Naive thymus-derived CD4-positive, alpha-beta T cell (primary cell): ENCODE measurements at regions of chr3 and their contacts with region 1.

Region 1: DNA sequence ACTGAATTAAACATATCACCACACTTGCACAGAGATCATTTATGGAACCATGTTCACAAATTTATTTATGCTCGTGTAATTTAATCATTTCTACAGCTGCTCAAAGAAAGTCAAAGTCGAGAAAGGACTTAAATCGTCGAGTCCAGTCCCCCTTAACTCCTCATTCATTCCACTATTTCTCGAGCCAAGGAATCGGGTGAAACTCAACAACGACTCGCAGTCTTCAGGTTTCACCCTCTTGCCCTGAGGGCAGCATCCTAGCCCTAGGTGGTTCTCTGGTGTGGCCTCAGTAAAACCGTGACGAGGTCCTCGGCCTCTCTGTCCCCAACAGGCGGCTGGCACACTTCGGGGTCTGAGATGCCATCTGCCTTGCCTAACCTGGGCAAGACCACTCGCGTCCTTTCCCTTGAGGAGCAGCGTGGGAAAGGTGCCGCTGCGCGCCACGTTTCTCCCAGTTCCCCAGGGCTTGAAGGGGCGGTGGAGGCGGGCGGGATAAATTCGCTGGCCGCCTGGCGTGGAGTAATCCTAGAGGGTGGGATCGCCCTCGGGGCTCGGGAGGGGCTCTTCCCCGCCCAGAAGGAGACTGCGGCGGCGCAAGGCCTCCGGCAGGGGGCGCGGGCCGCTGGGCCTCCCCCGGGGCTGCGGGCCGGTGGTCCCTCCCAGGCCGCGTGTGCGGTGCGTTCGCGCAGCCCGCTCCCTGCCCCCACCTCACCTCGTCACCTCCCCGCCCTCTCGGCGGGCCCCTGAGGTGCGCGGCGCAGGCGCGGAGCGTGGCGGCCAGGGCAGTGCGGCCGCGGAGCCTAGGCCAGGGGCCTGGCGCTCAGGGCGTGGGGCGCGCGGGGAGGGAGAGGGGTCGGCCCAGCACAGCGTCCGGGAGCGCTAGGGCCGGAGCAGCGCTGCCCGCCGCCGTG is at the start of gene ZNF639:
- DNase-seq: peak; percentile 80 to 89 (median 85)
- ATAC-seq: peak; percentile 94
- H3K4me3 ChIP-seq: peak within 1 kb of the TSS; percentile 93
- H3K4me3 Mint-ChIP-seq: peak within 1 kb of the TSS; percentile 88 to 96 (median 94)
- H3K27ac ChIP-seq: peak within 1 kb of the TSS; percentile 98
- H3K27ac Mint-ChIP-seq: peak within 1 kb of the TSS; percentile 81 to 98 (median 93)
- H3K4me1 ChIP-seq: peaks cover 9 to 22% of the 10 kb centered on the region in 2 donors
- H3K4me1 Mint-ChIP-seq: peaks cover 22 to 48% (median 37%) of the 10 kb centered on the region in 7 donors
- H3K27me3 ChIP-seq: no peaks in the 10 kb centered on the region
- H3K27me3 Mint-ChIP-seq: peaks cover 0 to 16% (median 0%) of the 10 kb centered on the region in 5 donors
- total RNA-seq, gene ZNF639: 33.1 to 74.9 (median 46.0) TPM

Region 2: GRCh38 chr3:179071550-179072397 is 250.8 kb before region 1 on chr3 and contains the start of gene ZMAT3:
- CTCF ChIA-PET with region 1: interaction called, 3 read pairs
- POLR2A ChIA-PET with region 1: interaction called, 5 read pairs
- intact Hi-C with region 1: loop called in 1 of 2 experiments (anchors 1 kb)
- DNase-seq: peak; percentile 72 to 88 (median 83)
- ATAC-seq: peak; percentile 88
- H3K4me3 ChIP-seq: peak within 1 kb of the TSS; percentile 74
- H3K4me3 Mint-ChIP-seq: peak within 1 kb of the TSS; percentile 97 to 100 (median 98)
- H3K27ac ChIP-seq: peak within 1 kb of the TSS; percentile 87
- H3K27ac Mint-ChIP-seq: peak within 1 kb of the TSS; percentile 89 to 98 (median 95)
- H3K4me1 ChIP-seq: peaks cover 13 to 18% of the 10 kb centered on the region in 2 donors
- H3K4me1 Mint-ChIP-seq: peaks cover 24 to 81% (median 59%) of the 10 kb centered on the region in 7 donors
- H3K27me3 ChIP-seq: no peaks in the 10 kb centered on the region
- H3K27me3 Mint-ChIP-seq: no peaks in the 10 kb centered on the region
- total RNA-seq, gene ZMAT3: 20.6 to 23.7 (median 21.7) TPM

Region 3: GRCh38 chr3:179260949-179261765 is 61.4 kb before region 1 on chr3:
- CTCF ChIA-PET with region 1: no interaction called
- POLR2A ChIA-PET with region 1: interaction called, 3 read pairs
- intact Hi-C with region 1: loop called (anchors 2 kb)
- DNase-seq: peak; percentile 34 to 73 (median 60)
- ATAC-seq: peak; percentile 96
- H3K4me3 ChIP-seq: peak overlapping the region; percentile 66
- H3K4me3 Mint-ChIP-seq: peak overlapping the region; percentile 60 to 89 (median 83)
- H3K27ac ChIP-seq: peak overlapping the region; percentile 58
- H3K27ac Mint-ChIP-seq: peak overlapping the region; percentile 11 to 78 (median 59)
- H3K4me1 ChIP-seq: peaks cover 0 to 6% of the 10 kb centered on the region in 2 donors
- H3K4me1 Mint-ChIP-seq: peaks cover 4 to 29% (median 21%) of the 10 kb centered on the region in 7 donors
- H3K27me3 ChIP-seq: no peaks in the 10 kb centered on the region
- H3K27me3 Mint-ChIP-seq: peaks cover 0 to 20% (median 0%) of the 10 kb centered on the region in 5 donors

Region 4: GRCh38 chr3:179451265-179452175 is 129.0 kb after region 1 on chr3 and contains the start of gene GNB4:
- CTCF ChIA-PET with region 1: no interaction called
- POLR2A ChIA-PET with region 1: no interaction called
- intact Hi-C with region 1: loop called in 1 of 2 experiments (anchors 2 kb)
- DNase-seq: peak in 8 of 9 donors; percentile 8 to 72 (median 32)
- ATAC-seq: peak; percentile 91
- H3K4me3 ChIP-seq: peak within 1 kb of the TSS; percentile 39
- H3K4me3 Mint-ChIP-seq: peak within 1 kb of the TSS; percentile 77 to 90 (median 86)
- H3K27ac ChIP-seq: no peak within 1 kb of the TSS
- H3K27ac Mint-ChIP-seq: peak within 1 kb of the TSS in 2 of 9 donors; percentile 62 to 84
- H3K4me1 ChIP-seq: peaks cover 0 to 10% of the 10 kb centered on the region in 2 donors
- H3K4me1 Mint-ChIP-seq: peaks cover 14 to 29% (median 23%) of the 10 kb centered on the region in 7 donors
- H3K27me3 ChIP-seq: peaks cover 4% of the 10 kb centered on the region in 2 donors
- H3K27me3 Mint-ChIP-seq: peaks cover 57 to 87% (median 75%) of the 10 kb centered on the region in 5 donors
- total RNA-seq, gene GNB4: 1.1 to 11.3 (median 2.1) TPM

Region 5: DNA sequence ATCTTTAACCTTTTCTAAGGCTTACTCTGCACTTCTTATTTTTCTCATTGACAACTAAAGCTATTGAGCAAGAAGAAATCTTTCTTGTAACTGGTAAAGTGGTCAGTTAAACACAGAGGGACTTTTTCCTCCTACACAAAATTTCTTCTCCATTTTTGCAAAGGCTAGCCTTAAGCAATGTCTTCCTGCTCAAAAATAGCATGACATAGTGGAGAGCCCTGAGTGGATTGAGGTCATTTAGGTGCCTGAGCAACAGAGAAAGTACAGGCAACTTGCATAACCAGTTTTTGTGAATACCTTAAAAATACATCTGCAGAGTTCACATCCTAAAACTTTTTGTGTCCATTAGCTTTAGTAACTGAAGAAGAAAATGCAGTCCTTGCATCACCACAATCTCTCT is 1134.7 kb after region 1 on chr3:
- CTCF ChIA-PET with region 1: no interaction called
- POLR2A ChIA-PET with region 1: no interaction called
- intact Hi-C with region 1: no loop called
- DNase-seq: no peak
- ATAC-seq: no peak
- H3K4me3 ChIP-seq: no peak overlapping the region
- H3K4me3 Mint-ChIP-seq: no peak overlapping the region
- H3K27ac ChIP-seq: no peak overlapping the region
- H3K27ac Mint-ChIP-seq: no peak overlapping the region
- H3K4me1 ChIP-seq: no peaks in the 10 kb centered on the region
- H3K4me1 Mint-ChIP-seq: no peaks in the 10 kb centered on the region
- H3K27me3 ChIP-seq: no peaks in the 10 kb centered on the region
- H3K27me3 Mint-ChIP-seq: no peaks in the 10 kb centered on the region

Region 6: GRCh38 chr3:180601688-180602666 is 1279.4 kb after region 1 on chr3 and contains the start of gene TTC14:
- CTCF ChIA-PET with region 1: no interaction called
- POLR2A ChIA-PET with region 1: no interaction called
- intact Hi-C with region 1: loop called in 1 of 2 experiments (anchors 5 kb)
- DNase-seq: peak; percentile 80 to 94 (median 92)
- ATAC-seq: peak; percentile 94
- H3K4me3 ChIP-seq: peak within 1 kb of the TSS; percentile 92
- H3K4me3 Mint-ChIP-seq: peak within 1 kb of the TSS; percentile 88 to 98 (median 96)
- H3K27ac ChIP-seq: peak within 1 kb of the TSS; percentile 88
- H3K27ac Mint-ChIP-seq: peak within 1 kb of the TSS; percentile 92 to 99 (median 97)
- H3K4me1 ChIP-seq: peaks cover 12% of the 10 kb centered on the region in 2 donors
- H3K4me1 Mint-ChIP-seq: peaks cover 14 to 47% (median 39%) of the 10 kb centered on the region in 7 donors
- H3K27me3 ChIP-seq: no peaks in the 10 kb centered on the region
- H3K27me3 Mint-ChIP-seq: peaks cover 4 to 23% (median 18%) of the 10 kb centered on the region in 5 donors
- total RNA-seq, gene TTC14: 76.5 to 201 (median 103) TPM